Activated naive CD4-positive, alpha-beta T cell treated with anti-CD3 and anti-CD28 coated beads for 36 hours (primary cell): ENCODE measurements at regions of chr14 and their contacts with region 1.

Region 1: DNA sequence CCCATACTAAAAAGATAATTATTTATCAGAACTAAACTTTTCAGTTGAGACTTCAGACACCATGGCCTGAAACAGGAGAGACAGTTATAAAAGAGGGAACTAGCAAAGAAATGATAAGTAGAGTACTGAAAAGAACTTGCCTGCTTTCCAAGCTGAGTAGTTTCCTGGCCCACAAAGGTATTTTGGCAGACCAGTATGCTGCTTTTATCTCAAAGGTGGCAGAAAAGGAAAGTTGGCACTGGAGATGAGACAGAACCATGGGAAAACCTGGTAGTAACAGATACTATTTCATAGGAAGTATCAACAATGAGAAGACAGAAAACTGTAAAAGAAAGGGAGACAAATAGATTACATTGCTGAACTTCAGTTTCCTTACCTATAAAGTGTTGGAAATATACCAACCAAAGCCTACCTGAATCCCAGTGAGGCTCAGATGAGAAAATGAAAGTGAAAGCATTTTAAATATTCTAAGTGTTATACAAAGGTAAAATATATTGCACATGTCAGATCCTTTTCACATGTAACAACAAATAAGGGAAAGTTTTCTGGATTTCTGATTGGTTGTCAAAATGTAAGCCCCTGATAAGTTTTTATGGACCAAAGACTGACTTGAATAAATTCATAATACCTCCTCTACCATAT is 155.3 kb upstream of the FSCB start:
- DNase-seq: no peak
- H3K4me3 Mint-ChIP-seq: no peak overlapping the region
- H3K27ac Mint-ChIP-seq: no peak overlapping the region
- H3K4me1 Mint-ChIP-seq: peaks cover 17% of the 10 kb centered on the region
- H3K27me3 Mint-ChIP-seq: no peaks in the 10 kb centered on the region

Region 2: DNA sequence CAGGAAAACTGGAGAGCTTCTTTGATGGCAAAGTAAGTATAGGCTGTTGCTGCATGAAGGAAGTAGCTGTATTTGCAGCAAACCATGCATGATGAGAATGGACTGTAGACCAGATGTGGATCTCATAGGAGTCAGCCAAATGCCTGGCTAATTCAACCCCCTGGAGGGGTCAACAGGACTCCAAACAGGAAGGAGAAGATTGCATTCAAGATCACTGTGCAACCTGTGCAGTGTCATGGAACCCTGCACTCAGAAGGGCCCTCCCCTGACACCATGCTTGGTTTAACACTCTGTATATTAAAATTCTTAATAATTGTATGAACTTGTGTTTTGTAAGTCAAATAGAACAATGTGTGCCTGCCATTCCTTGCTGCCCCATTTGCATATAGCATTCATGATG is 69.8 kb after region 1 on chr14:
- CTCF ChIA-PET with region 1: no interaction called
- intact Hi-C with region 1: no loop called
- DNase-seq: no peak
- H3K4me3 Mint-ChIP-seq: no peak overlapping the region
- H3K27ac Mint-ChIP-seq: no peak overlapping the region
- H3K4me1 Mint-ChIP-seq: no peaks in the 10 kb centered on the region
- H3K27me3 Mint-ChIP-seq: peaks cover 1% of the 10 kb centered on the region

Region 3: DNA sequence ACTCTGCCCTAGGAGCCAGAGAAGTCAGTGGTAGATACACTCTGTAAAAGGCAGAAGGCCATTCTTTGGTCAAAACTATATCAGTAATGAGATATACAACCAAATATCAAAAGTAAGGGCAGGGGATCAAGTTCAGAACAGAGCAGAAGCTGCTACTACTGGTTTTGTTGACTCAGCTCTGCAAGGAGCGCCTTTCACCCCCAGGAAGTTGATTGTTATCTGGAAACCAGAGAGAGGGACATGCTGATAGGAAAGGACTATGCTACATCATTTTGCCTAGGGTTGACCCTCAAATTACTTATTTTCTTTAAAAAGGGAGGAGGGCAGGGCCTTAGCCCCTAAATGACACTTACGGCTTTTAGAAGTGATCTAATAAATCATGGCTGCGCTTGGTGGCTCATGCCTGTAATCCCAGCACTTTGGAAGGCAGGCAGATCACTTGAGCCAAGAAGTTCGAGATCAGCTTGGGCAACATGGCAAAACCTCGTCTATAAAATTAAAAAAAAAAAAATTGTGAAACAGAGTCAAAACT is 105.3 kb after region 1 on chr14:
- CTCF ChIA-PET with region 1: no interaction called
- intact Hi-C with region 1: loop called (anchors 5 kb)
- DNase-seq: no peak
- H3K4me3 Mint-ChIP-seq: no peak overlapping the region
- H3K27ac Mint-ChIP-seq: no peak overlapping the region
- H3K4me1 Mint-ChIP-seq: peaks cover 20% of the 10 kb centered on the region
- H3K27me3 Mint-ChIP-seq: peaks cover 14% of the 10 kb centered on the region